CD14-positive monocyte (primary cell): ENCODE measurements at regions of chr13 and their contacts with region 1.

Region 1: GRCh38 chr13:29850224-29850898 is at the start of gene UBL3:
- DNase-seq: peak; percentile 89 to 97 (median 96)
- H3K4me3 ChIP-seq: peak within 1 kb of the TSS; percentile 74 to 91 (median 88)
- H3K4me3 Mint-ChIP-seq: peak within 1 kb of the TSS; percentile 97 to 99
- H3K27ac ChIP-seq: peak within 1 kb of the TSS; percentile 86 to 92
- H3K27ac Mint-ChIP-seq: peak within 1 kb of the TSS; percentile 97 to 100 (median 99)
- H3K4me1 ChIP-seq: peaks cover 19 to 28% of the 10 kb centered on the region in 2 donors
- H3K4me1 Mint-ChIP-seq: peaks cover 33% of the 10 kb centered on the region
- H3K27me3 ChIP-seq: no peaks in the 10 kb centered on the region
- H3K27me3 Mint-ChIP-seq: no peaks in the 10 kb centered on the region
- CTCF ChIP-seq: no peak
- polyA plus RNA-seq, gene UBL3: 13.0 to 32.3 (median 28.2) TPM

Region 2: DNA sequence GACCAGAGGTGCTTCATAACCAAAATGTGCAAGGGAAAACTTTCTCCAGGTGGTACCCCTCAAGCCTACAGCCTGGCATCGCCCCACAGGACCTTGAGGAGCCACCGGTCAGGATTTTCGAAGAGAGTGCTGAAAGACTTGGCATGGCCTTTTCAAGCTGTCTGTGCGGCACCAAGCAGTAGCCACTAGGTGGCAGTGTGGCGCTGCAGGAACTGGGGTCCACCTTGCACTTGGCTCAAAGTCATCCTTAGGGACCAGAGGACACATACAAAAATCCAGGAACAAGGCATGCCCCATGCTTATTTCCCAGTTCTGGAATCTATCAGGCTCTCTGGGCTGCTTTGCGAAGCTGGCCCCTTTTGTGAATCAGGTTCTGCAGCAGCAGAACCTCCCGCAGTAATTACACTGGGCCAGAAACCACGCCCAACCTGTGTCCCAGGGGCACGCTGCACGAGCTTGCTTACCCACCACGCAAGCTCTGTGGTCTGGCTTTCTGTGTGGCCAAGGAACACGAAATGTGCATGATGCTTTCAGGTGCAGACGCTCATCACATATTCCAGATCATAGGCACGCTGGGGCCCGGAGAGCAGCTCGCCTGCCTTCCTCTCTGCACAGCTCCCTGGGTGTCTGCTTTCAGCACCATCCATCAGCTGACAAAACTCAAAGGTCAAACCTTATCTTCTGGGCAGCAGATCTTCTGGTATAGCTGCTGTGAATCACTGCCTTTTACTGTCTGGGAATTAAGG is 342.1 kb before region 1 on chr13:
- intact Hi-C with region 1: loop called in 1 of 2 experiments (anchors 10 kb)
- DNase-seq: peak; percentile 50 to 66 (median 66)
- H3K4me3 ChIP-seq: no peak overlapping the region
- H3K4me3 Mint-ChIP-seq: no peak overlapping the region
- H3K27ac ChIP-seq: no peak overlapping the region
- H3K27ac Mint-ChIP-seq: no peak overlapping the region
- H3K4me1 ChIP-seq: peaks cover 0 to under 1% of the 10 kb centered on the region in 2 donors
- H3K4me1 Mint-ChIP-seq: peaks cover 2% of the 10 kb centered on the region
- H3K27me3 ChIP-seq: no peaks in the 10 kb centered on the region
- H3K27me3 Mint-ChIP-seq: peaks cover 0 to 11% (median 4%) of the 10 kb centered on the region in 3 donors
- CTCF ChIP-seq: peak; percentile 98

Region 3: GRCh38 chr13:29758531-29759114 is 91.7 kb before region 1 on chr13:
- intact Hi-C with region 1: loop called in 1 of 2 experiments (anchors 5 kb)
- DNase-seq: peak; percentile 91 to 98 (median 93)
- H3K4me3 ChIP-seq: peak overlapping the region in 1 of 3 experiments; percentile 16
- H3K4me3 Mint-ChIP-seq: peak overlapping the region in 1 of 2 donors; percentile 71
- H3K27ac ChIP-seq: peak overlapping the region in 1 of 2 donors; percentile 60
- H3K27ac Mint-ChIP-seq: peak overlapping the region; percentile 77 to 94 (median 88)
- H3K4me1 ChIP-seq: peaks cover 11 to 15% of the 10 kb centered on the region in 2 donors
- H3K4me1 Mint-ChIP-seq: peaks cover 20% of the 10 kb centered on the region
- H3K27me3 ChIP-seq: peaks cover 5 to 20% of the 10 kb centered on the region in 2 donors
- H3K27me3 Mint-ChIP-seq: peaks cover 16 to 38% (median 27%) of the 10 kb centered on the region in 3 donors
- CTCF ChIP-seq: no peak

Region 4: DNA sequence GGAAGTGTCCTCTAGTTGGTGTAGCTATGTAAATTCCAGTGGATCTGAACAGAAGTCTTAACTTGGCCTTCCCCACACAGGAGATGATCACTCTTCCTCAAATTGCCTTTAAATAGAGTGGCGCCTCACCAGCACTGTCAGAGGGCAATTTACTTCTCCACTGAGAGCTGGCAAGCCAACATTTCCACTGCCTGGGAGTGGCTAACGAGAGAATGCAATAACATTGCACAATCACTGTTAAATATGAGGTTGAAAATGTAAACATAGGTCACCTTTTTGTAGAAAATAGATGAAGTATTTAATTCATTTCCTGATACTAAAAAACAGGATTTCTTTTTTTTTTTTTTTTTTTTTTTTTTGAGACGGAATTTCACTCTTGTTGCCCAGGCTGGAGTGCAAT is 55.5 kb after region 1 on chr13:
- intact Hi-C with region 1: no loop called
- DNase-seq: peak; percentile 46 to 59 (median 47)
- H3K4me3 ChIP-seq: no peak overlapping the region
- H3K4me3 Mint-ChIP-seq: no peak overlapping the region
- H3K27ac ChIP-seq: peak overlapping the region in 1 of 2 donors; percentile 42
- H3K27ac Mint-ChIP-seq: peak overlapping the region in 4 of 7 donors; percentile 10 to 76 (median 38)
- H3K4me1 ChIP-seq: peaks cover 6 to 11% of the 10 kb centered on the region in 2 donors
- H3K4me1 Mint-ChIP-seq: peaks cover 11% of the 10 kb centered on the region
- H3K27me3 ChIP-seq: no peaks in the 10 kb centered on the region
- H3K27me3 Mint-ChIP-seq: peaks cover 0 to 1% (median 0%) of the 10 kb centered on the region in 3 donors
- CTCF ChIP-seq: no peak

Region 5: GRCh38 chr13:30306762-30307193 is 456.4 kb after region 1 on chr13:
- intact Hi-C with region 1: loop called (anchors 5 to 10 kb)
- DNase-seq: peak; percentile 84 to 90 (median 86)
- H3K4me3 ChIP-seq: peak overlapping the region; percentile 73 to 97 (median 84)
- H3K4me3 Mint-ChIP-seq: peak overlapping the region; percentile 83 to 90
- H3K27ac ChIP-seq: peak overlapping the region in 1 of 2 donors; percentile 79
- H3K27ac Mint-ChIP-seq: peak overlapping the region in 6 of 7 donors; percentile 33 to 81 (median 68)
- H3K4me1 ChIP-seq: peaks cover 18 to 24% of the 10 kb centered on the region in 2 donors
- H3K4me1 Mint-ChIP-seq: peaks cover 36% of the 10 kb centered on the region
- H3K27me3 ChIP-seq: no peaks in the 10 kb centered on the region
- H3K27me3 Mint-ChIP-seq: peaks cover 0 to 2% (median 0%) of the 10 kb centered on the region in 3 donors
- CTCF ChIP-seq: no peak

Region 6: DNA sequence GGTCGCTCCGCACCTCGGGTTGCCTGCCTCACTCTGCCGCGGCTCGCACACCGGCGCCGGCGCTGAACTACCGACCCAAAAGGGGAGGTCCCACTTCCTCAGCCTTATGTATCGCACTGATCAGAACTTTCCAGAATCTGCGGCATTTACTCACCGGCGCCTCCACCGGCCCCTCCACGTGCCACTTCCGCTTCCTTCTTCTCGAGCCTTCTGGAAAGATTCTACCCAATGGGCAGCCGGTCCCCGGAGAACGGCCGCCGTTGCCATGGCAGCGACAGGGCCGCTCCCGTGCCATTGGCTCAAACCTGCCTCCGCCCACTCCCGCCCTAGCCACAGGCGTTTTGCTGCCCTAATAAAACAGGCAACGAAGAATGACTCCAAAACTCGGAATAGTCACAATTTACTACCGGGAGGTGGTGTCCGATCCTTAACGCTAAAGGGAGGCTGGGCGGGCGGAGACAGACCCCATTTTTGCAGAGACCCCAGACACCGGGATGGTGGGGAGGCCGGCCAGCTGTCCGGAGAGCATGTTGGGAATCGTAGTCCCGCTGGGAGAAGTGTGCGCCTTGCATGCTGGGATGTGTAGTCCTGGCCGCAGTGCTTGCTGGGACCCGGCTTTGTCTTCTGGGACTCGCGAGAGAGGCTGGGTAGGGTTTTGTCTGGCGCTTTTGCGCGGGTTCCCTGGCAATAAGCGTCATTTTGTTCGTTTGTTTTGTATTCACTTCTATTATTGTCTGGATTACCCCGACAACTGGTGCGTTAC is 1311.6 kb after region 1 on chr13 and contains the start of gene HSPH1:
- intact Hi-C with region 1: loop called in 1 of 2 experiments (anchors 5 kb)
- DNase-seq: peak; percentile 97 to 99 (median 98)
- H3K4me3 ChIP-seq: peak within 1 kb of the TSS; percentile 72 to 98 (median 90)
- H3K4me3 Mint-ChIP-seq: peak within 1 kb of the TSS; percentile 96 to 97
- H3K27ac ChIP-seq: peak within 1 kb of the TSS; percentile 85 to 92
- H3K27ac Mint-ChIP-seq: peak within 1 kb of the TSS; percentile 81 to 94 (median 92)
- H3K4me1 ChIP-seq: peaks cover 15 to 30% of the 10 kb centered on the region in 2 donors
- H3K4me1 Mint-ChIP-seq: peaks cover 24% of the 10 kb centered on the region
- H3K27me3 ChIP-seq: no peaks in the 10 kb centered on the region
- H3K27me3 Mint-ChIP-seq: peaks cover 0 to 5% (median 0%) of the 10 kb centered on the region in 3 donors
- CTCF ChIP-seq: no peak
- polyA plus RNA-seq, gene HSPH1: 7.4 to 11.3 (median 9.1) TPM